Activated CD4-positive, alpha-beta T cell treated with anti-CD3 and anti-CD28 coated beads, Interleukin-2, amount 10 ng/mL, durations not matched to agents 24 days and 14 days (primary cell): ENCODE measurements at regions of chr7 and their contacts with region 1.

Region 1: DNA sequence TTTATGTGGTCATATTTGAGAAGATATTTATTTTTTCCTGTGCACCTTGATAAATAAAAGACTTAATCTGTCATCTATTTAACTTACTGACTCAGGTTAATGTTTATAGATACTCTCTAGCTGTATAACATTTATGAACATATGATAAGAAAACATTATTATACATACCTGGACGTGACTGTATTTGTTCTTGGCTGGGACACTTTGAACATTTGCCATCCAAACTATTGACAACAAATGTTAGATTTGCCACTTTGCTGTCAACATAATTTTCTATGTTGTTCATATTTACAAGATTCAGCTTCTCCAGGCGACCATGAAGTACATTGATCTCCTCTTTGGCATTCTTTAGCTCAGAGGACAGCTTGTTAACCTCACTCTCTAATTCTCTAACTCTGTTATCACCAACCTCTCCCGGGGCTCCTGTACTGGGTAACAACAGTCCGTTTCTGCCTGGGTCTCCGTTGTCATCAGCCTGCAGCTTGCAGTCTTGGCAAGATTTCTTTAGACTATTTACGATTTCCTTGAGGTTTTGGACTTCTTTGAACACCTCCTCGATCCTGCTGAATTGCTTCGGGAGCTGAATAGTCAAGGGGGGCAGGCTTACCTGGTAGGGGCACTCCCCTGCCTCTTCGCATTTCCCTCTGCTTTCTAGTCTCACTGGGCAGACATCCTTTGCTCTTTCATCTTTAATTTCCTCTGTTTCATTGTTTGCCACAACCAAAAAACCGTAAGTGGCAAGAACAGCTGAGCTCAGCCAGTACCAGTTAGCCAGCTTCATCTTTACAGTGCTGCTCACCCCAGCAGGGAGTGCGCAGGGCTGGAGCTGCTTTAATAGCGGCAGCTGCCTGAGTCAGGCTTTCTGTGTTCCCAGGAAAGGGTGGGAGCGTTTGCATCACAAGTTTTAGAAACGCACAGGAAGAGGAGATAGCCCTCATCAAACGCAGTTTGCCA is at the start of gene FGL2:
- DNase-seq: peak; percentile 78
- H3K4me3 Mint-ChIP-seq: peak within 1 kb of the TSS; percentile 86
- H3K27ac Mint-ChIP-seq: peak within 1 kb of the TSS; percentile 86
- H3K4me1 Mint-ChIP-seq: peaks cover 42% of the 10 kb centered on the region
- H3K27me3 Mint-ChIP-seq: no peaks in the 10 kb centered on the region
- total RNA-seq, gene FGL2: 1.7 and 1.8 TPM in 2 replicates

Region 2: GRCh38 chr7:77184990-77185389 is 14.3 kb before region 1 on chr7:
- intact Hi-C with region 1: loop called (anchors 2 kb)
- DNase-seq: no peak
- H3K4me3 Mint-ChIP-seq: no peak overlapping the region
- H3K27ac Mint-ChIP-seq: no peak overlapping the region
- H3K4me1 Mint-ChIP-seq: peaks cover 2% of the 10 kb centered on the region
- H3K27me3 Mint-ChIP-seq: no peaks in the 10 kb centered on the region

Region 3: GRCh38 chr7:77247206-77247850 is 48.0 kb after region 1 on chr7:
- intact Hi-C with region 1: loop called (anchors 5 kb)
- DNase-seq: peak; percentile 96
- H3K4me3 Mint-ChIP-seq: no peak overlapping the region
- H3K27ac Mint-ChIP-seq: no peak overlapping the region
- H3K4me1 Mint-ChIP-seq: peaks cover 20% of the 10 kb centered on the region
- H3K27me3 Mint-ChIP-seq: peaks cover 12% of the 10 kb centered on the region